Mammary epithelial cell (primary cell): ENCODE measurements at regions of chr12 and their contacts with region 1.

Region 1: DNA sequence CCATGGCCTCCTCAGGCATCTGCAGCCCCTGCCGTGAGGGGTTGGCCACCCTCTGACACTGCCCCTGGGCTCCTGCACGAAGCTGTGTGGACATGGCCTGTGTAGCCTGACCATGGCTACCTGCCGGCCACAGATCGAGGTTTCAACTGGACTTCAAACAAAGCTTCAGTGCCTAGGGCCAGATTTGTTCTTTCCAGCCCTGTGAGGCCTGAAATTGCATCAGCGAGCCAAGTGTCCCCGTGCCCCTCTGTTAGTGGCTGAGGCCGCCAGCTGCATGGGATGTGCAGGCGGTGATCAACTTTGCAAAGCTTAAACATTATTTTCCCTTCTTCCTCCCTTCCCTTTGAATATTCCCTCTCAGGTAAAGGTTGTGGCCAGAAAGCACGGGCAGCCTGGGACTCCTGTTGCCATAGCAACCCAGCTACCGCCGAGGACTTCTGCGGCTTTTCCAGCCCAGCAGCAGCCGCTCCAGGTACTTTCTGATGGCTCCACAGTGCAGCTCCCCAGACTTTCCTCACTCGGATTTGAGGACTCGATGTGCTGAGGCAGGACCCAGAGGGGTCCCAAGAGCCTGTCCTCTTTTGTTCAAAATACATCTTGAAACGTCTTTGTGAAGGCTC is 35.8 kb downstream of the DDX51 start:
- DNase-seq: no peak
- H3K4me3 ChIP-seq: no peak overlapping the region
- H3K27ac ChIP-seq: no peak overlapping the region
- H3K4me1 ChIP-seq: no peaks in the 10 kb centered on the region
- H3K27me3 ChIP-seq: no peaks in the 10 kb centered on the region
- CTCF ChIP-seq: no peak

Region 2: DNA sequence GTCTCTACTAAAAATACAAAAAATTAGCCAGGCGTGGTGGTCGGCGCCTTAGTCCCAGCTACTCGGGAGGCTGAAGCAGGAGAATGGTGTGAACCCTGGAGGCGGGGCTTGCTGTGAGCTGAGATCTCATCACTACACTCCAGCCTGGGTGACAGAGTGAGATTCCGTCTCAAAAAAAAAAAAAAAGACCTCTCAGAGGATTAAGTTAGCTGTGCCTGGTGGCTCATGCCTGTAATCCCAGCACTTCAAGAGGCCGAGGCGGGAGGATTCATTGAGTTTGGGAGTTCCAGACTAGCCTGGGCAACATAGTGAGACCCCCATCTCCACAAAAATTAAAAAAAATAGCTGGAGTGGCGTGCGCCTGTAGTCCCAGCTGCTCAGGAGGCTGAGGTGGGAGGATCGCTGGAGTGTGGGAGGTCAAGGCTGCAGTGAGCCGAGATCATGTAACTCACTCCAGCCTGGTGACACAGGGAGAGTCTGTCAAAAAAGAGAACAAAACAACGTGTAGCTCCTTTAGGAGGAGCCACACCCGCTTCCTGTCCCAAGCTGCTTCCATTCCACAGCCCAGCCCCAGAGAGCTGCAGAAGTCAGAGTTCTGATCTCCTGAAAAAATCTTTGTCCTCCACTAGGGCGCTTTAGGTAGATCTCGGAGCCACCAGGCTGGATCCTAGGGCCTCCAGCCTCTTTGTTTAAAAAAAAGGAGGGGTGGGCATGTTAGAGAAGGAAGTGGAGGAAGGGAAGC is 225.4 kb before region 1 on chr12:
- CTCF ChIA-PET with region 1: no interaction called
- dilution Hi-C with region 1: loop called (anchors 10 kb)
- in situ Hi-C with region 1: no loop called
- intact Hi-C with region 1: no loop called
- DNase-seq: no peak
- H3K4me3 ChIP-seq: no peak overlapping the region
- H3K27ac ChIP-seq: no peak overlapping the region
- H3K4me1 ChIP-seq: peaks cover 6% of the 10 kb centered on the region
- H3K27me3 ChIP-seq: no peaks in the 10 kb centered on the region
- CTCF ChIP-seq: no peak

Region 3: DNA sequence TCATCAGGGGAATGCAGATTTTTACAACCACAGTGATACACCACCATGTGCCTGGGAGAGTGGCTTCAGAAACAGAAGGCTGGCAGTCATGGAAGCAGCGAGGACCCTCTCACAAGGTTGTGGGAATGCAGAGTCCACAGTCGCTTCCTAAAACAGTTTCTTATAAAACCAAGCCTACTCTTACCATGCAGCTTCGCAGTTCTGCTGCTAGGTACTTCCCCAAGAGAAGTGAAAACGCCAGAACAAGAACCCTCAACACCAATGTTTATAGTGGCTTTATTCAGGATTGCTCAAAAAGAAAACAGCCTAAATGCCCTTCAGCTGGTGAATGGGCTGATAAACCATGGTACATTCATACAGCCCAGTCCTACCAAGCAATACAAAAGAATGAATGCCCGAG is 51.4 kb before region 1 on chr12:
- CTCF ChIA-PET with region 1: no interaction called
- dilution Hi-C with region 1: loop called (anchors 5 kb)
- in situ Hi-C with region 1: no loop called
- intact Hi-C with region 1: no loop called
- DNase-seq: no peak
- H3K4me3 ChIP-seq: no peak overlapping the region
- H3K27ac ChIP-seq: no peak overlapping the region
- H3K4me1 ChIP-seq: peaks cover 8% of the 10 kb centered on the region
- H3K27me3 ChIP-seq: no peaks in the 10 kb centered on the region
- CTCF ChIP-seq: no peak